Left cardiac atrium (tissue), 4 donors: ENCODE measurements at regions of chr13 and their contacts with region 1.

Region 1: DNA sequence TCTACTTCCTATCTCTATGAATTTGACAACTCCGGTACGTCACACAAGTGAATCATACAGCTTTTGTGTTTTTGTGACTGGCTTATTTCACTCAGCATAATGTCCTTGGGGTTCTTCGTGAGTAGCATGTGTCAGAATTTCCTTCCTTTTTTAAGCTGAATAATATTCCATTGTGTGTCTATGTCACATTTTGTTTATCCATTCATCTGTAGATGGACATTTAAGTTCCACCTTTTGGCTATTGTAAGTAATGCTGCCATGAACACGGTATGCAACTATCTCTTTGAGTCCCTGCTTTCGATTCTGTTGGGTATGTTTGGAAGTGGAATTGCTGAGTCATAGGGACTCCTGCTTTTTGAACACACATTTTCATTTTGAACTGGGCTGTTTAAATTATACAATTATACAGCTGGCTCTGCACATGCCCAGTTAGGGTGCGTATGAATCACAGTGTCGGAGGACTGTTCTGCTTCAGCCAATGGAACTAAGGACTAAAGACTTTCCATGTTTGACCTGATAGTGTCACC is 43.0 kb upstream of the C13orf42 start:
- DNase-seq: no peak
- ATAC-seq: peak in 1 of 2 donors; percentile 61

Region 2: GRCh38 chr13:51213173-51213728 is 59.2 kb after region 1 on chr13:
- intact Hi-C with region 1: loop called (anchors 10 kb)
- DNase-seq: no peak
- ATAC-seq: peak in 1 of 2 donors; percentile 77